ENCODE measurements at regions of chr11 and their contacts with region 1.

Region 1: DNA sequence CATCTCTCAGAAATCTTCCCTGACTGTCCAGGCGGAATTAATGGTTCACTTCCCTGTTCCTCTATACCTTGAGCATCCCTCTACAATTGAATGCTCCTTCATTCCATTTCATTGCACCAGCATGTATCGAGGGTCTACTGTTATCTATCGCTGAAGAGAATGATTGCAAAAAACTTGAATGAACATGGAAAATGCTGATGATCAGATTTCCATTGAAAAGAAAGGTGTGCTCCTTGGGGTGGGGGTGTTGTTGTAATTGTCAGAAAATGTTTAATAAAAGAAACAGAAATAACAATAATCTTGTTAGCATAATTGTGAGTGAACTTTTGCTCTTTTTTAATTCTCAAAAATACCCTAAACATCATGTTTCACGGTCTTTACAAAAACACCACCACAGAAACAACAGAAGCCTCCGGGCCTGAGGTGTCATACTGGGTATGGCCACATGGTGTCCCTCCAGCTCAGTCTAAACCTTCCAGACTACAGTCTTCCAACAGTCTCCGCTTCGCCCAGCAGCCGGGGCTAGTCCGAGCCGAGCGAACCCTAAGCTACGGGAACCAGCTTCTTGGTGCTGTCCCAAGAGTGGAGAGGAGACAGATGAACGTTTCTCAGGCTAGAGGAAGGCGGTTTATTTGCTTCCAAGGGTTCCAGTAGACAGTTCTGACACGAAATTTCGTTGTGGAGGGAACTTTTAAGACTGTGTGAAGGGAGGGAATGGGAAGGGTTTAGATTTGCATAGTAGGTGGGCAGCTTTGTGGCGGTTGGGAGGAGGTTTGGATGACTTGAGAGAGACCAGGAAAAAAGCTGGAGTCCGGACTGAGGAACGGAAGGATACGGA is 75.8 kb upstream of the ZBED5 start:
- DNase-seq: peak; percentile 88
- H3K4me3 ChIP-seq: peak overlapping the region; percentile 41 to 60 (median 50)
- H3K27ac ChIP-seq: peak overlapping the region; percentile 19
- H3K4me1 ChIP-seq: peaks cover 17% of the 10 kb centered on the region
- H3K27me3 ChIP-seq: no peaks in the 10 kb centered on the region
- CTCF ChIP-seq: peak; percentile 89 to 98

Region 2: DNA sequence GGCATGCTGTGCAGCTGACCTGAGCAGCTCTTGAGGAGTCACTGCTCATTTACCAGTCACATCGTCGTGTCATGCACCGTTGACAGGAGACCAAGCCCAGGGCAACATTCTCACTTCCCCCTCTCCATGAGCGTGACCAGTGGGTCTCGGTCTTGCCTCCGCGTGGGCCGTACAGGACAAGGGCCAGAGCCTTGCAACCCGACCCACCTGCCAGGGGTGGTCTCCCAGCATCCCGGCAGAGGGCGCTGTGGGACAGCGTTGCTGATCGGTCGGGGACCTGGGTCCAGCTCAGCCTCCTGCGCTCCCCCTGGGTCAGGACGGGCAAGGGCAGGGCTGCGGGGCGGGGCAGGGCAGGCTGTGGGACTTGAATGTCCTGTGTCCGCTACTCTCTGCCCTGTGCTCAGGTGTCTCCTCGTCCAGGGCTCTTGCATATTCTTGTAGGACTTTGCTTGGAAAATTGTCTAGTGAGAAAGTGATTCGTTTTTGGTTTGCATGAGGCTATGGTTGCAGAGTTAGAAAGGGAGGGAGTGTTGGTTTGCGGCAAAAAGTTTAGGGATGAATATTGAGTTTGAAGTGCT is 141.2 kb before region 1 on chr11:
- CTCF ChIA-PET with region 1: no interaction called
- dilution Hi-C with region 1: no loop called
- in situ Hi-C with region 1: loop called in 1 of 2 experiments (anchors 10 kb)
- intact Hi-C with region 1: loop called (anchors 1 kb)
- DNase-seq: peak; percentile 59
- H3K4me3 ChIP-seq: peak overlapping the region in 1 of 3 experiments; percentile 17
- H3K27ac ChIP-seq: no peak overlapping the region
- H3K4me1 ChIP-seq: peaks cover 7% of the 10 kb centered on the region
- H3K27me3 ChIP-seq: no peaks in the 10 kb centered on the region
- CTCF ChIP-seq: peak; percentile 87 to 95

Region 3: GRCh38 chr11:10857709-10858438 is 75.8 kb before region 1 on chr11 and contains the start of gene ZBED5:
- CTCF ChIA-PET with region 1: no interaction called
- dilution Hi-C with region 1: no loop called
- in situ Hi-C with region 1: no loop called
- intact Hi-C with region 1: loop called (anchors 1 kb)
- DNase-seq: peak; percentile 99
- H3K4me3 ChIP-seq: peak within 1 kb of the TSS; percentile 70 to 91 (median 89)
- H3K27ac ChIP-seq: peak within 1 kb of the TSS; percentile 80
- H3K4me1 ChIP-seq: peaks cover 4% of the 10 kb centered on the region
- H3K27me3 ChIP-seq: no peaks in the 10 kb centered on the region
- CTCF ChIP-seq: peak in 1 of 2 donors; percentile 33
- total RNA-seq, gene ZBED5: 27.8 to 29.4 TPM

Region 4: GRCh38 chr11:10899121-10899830 is 34.4 kb before region 1 on chr11:
- CTCF ChIA-PET with region 1: interaction called, 4 read pairs
- dilution Hi-C with region 1: no loop called
- in situ Hi-C with region 1: no loop called
- intact Hi-C with region 1: loop called (anchors 1 kb)
- DNase-seq: peak; percentile 99
- H3K4me3 ChIP-seq: peak overlapping the region in 2 of 3 experiments; percentile 1 to 19
- H3K27ac ChIP-seq: peak overlapping the region; percentile 96
- H3K4me1 ChIP-seq: peaks cover 38% of the 10 kb centered on the region
- H3K27me3 ChIP-seq: no peaks in the 10 kb centered on the region
- CTCF ChIP-seq: no peak

Region 5: DNA sequence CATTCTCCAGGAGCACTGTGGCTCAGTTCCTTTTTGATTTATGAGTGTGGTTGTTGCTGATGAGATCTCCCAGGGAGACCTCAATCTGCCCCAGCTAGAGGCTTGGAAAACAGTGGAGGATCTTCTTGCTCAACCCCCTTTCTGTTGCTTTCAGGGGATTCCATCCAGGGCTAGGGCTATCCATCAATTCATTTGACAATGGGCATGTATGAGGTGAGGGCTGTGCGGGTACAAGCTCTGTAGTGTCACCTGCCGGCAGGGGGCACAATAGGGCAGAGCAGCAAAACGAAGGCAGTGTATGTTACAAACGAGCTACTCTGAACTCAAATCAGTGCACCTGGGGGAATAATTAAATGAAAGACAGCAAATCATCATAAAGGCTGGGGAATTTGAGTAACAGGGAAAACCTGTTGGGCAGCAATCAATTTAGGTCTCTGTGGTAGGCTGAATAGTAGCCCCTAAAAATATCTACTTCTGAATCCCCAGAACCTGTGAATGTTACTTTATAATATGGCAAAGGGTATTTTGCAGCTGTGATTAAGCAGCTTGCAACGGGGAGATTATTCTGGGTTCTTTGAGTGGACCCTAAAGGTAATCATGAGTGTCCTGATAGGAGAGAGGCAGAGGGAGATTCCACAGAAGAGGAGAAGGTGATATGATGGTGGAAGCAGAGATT is 94.5 kb after region 1 on chr11:
- CTCF ChIA-PET with region 1: interaction called, 8 read pairs
- dilution Hi-C with region 1: no loop called
- in situ Hi-C with region 1: loop called (anchors 5 kb)
- intact Hi-C with region 1: no loop called
- DNase-seq: peak; percentile 50
- H3K4me3 ChIP-seq: no peak overlapping the region
- H3K27ac ChIP-seq: no peak overlapping the region
- H3K4me1 ChIP-seq: peaks cover 20% of the 10 kb centered on the region
- H3K27me3 ChIP-seq: no peaks in the 10 kb centered on the region
- CTCF ChIP-seq: peak; percentile 96

Region 6: GRCh38 chr11:11621573-11622319 is 688.1 kb after region 1 on chr11 and contains the start of gene GALNT18:
- CTCF ChIA-PET with region 1: interaction called, 7 read pairs
- dilution Hi-C with region 1: no loop called
- in situ Hi-C with region 1: no loop called
- intact Hi-C with region 1: loop called (anchors 5 kb)
- DNase-seq: peak; percentile 97
- H3K4me3 ChIP-seq: peak within 1 kb of the TSS; percentile 68 to 75 (median 75)
- H3K27ac ChIP-seq: peak within 1 kb of the TSS; percentile 51
- H3K4me1 ChIP-seq: peaks cover 27% of the 10 kb centered on the region
- H3K27me3 ChIP-seq: no peaks in the 10 kb centered on the region
- CTCF ChIP-seq: peak; percentile 12 to 53
- total RNA-seq, gene GALNT18: 25.0 to 34.3 TPM

Region 7: DNA sequence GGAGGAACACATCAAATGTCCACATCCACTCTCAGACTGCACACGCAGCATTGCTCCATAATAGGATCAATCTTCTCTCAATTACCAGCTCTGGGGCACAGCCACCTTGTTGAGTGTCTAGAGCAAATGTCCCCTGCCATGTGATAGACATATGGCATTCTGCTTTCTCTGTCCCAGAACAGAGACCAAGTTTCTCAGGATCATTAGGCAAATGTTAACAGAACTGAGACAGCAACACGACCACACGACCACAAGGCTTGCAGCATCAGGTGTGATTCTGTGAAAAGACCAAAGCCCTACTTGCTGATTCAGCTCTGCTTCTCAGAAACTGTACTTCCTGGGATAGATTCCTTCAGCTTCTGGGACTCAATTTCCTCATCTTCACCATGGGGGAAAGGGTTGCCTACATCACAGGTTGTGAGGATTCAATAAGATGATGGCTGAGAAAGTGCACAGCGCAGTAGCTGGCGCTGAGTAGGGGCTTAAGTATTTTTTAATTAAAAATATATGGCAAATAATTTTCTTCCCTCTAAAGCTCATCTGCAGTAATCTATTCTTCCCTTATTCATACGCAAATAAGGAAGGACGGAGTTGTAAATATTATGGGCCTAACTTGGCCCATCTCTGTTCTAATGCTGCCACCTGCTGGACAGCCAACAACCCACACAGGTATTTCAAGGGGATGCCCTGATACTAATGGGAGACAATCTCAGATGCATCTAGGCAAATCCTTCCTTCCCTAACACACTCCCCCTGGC is 853.8 kb after region 1 on chr11:
- CTCF ChIA-PET with region 1: no interaction called
- dilution Hi-C with region 1: no loop called
- in situ Hi-C with region 1: loop called in 1 of 2 experiments (anchors 10 kb)
- intact Hi-C with region 1: loop called (anchors 1 kb)
- DNase-seq: peak; percentile 52
- H3K4me3 ChIP-seq: no peak overlapping the region
- H3K27ac ChIP-seq: no peak overlapping the region
- H3K4me1 ChIP-seq: peaks cover 13% of the 10 kb centered on the region
- H3K27me3 ChIP-seq: no peaks in the 10 kb centered on the region
- CTCF ChIP-seq: peak; percentile 78 to 83

Measured in mammary epithelial cell (primary cell).